ENCODE measurements at regions of chr7 and their contacts with region 1.

Region 1: DNA sequence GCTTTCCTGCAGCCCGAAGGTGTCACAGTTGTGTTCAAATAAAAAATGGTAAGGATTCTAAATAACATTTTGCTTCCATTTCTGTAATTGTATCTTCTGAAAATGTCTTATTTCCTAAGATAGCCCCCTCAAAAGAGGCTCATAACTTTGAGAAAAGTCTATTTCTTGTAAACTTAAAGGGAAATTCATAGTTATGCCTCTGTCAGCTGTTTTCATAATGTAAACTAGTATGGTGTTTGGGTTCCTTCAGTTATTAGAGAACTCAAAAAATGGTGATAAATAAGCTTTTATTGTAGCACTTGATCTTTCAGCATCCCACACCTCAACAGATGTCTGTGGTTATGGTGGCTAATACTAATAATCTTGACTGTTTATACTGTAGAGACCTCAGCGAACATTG is 57.1 kb downstream of the KLHDC10 start:
- DNase-seq: no peak
- ATAC-seq: no peak
- H3K4me3 ChIP-seq: no peak overlapping the region
- H3K27ac ChIP-seq: no peak overlapping the region
- H3K4me1 ChIP-seq: no peaks in the 10 kb centered on the region
- H3K27me3 ChIP-seq: no peaks in the 10 kb centered on the region
- CTCF ChIP-seq: no peak

Region 2: GRCh38 chr7:130145424-130146100 is 18.2 kb after region 1 on chr7:
- CTCF ChIA-PET with region 1: no interaction called
- POLR2A ChIA-PET with region 1: no interaction called
- intact Hi-C with region 1: loop called (anchors 1 kb)
- DNase-seq: no peak
- ATAC-seq: no peak
- H3K4me3 ChIP-seq: no peak overlapping the region
- H3K27ac ChIP-seq: no peak overlapping the region
- H3K4me1 ChIP-seq: peaks cover 5% of the 10 kb centered on the region; the same call in 1 of the 2 replicates
- H3K27me3 ChIP-seq: no peaks in the 10 kb centered on the region
- CTCF ChIP-seq: no peak

Region 3: GRCh38 chr7:130593033-130593432 is 465.6 kb after region 1 on chr7:
- CTCF ChIA-PET with region 1: no interaction called
- POLR2A ChIA-PET with region 1: no interaction called
- intact Hi-C with region 1: no loop called
- DNase-seq: peak; percentile 4
- ATAC-seq: no peak
- H3K4me3 ChIP-seq: no peak overlapping the region
- H3K27ac ChIP-seq: no peak overlapping the region
- H3K4me1 ChIP-seq: no peaks in the 10 kb centered on the region
- H3K27me3 ChIP-seq: no peaks in the 10 kb centered on the region
- CTCF ChIP-seq: no peak